ENCODE measurements at regions of chr2 and their contacts with region 1.

Region 1: GRCh38 chr2:190408538-190409271 is 550 bp downstream of the MFSD6 start:
- DNase-seq: peak in 1 of 2 experiments; percentile 51
- H3K4me3 ChIP-seq: peak overlapping the region; percentile 70
- H3K4me3 Mint-ChIP-seq: peak overlapping the region; percentile 66
- H3K27ac Mint-ChIP-seq: no peak overlapping the region
- H3K4me1 ChIP-seq: peaks cover 15% of the 10 kb centered on the region
- H3K4me1 Mint-ChIP-seq: no peaks in the 10 kb centered on the region
- H3K27me3 ChIP-seq: no peaks in the 10 kb centered on the region
- H3K27me3 Mint-ChIP-seq: no peaks in the 10 kb centered on the region
- CTCF ChIP-seq: no peak

Region 2: GRCh38 chr2:190679813-190680591 is 271.3 kb after region 1 on chr2:
- CTCF ChIA-PET with region 1: no interaction called
- POLR2A ChIA-PET with region 1: no interaction called
- intact Hi-C with region 1: loop called (anchors 10 kb)
- DNase-seq: peak; percentile 70 to 71
- H3K4me3 ChIP-seq: no peak overlapping the region
- H3K4me3 Mint-ChIP-seq: peak overlapping the region; percentile 18
- H3K27ac Mint-ChIP-seq: peak overlapping the region; percentile 77
- H3K4me1 ChIP-seq: peaks cover 16% of the 10 kb centered on the region
- H3K4me1 Mint-ChIP-seq: peaks cover 34% of the 10 kb centered on the region
- H3K27me3 ChIP-seq: no peaks in the 10 kb centered on the region
- H3K27me3 Mint-ChIP-seq: no peaks in the 10 kb centered on the region
- CTCF ChIP-seq: peak; percentile 59 to 66

Measured in Caco-2 (cell line).